WTC11 (cell line): ENCODE measurements at regions of chr11 and their contacts with region 1.

Region 1: DNA sequence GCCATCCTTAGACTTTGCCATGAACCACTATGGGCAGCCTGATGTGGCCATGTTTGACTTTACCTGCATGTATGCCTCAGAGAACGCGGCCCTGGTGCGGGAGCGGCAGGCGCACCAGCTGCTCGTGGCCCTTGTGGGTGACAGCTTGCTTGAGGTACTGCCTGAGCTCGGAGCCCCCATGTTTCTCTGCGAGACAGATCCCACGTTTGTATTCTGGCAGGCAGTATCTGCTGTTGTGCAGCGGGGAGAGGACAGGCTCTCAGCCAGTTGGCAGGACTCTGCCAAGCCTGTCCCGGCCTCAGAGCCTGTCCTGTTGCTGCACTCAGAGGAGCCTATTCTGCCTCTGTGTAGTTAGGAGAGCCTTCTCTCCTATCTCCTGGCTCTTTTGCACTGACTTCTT is 109.9 kb downstream of the MICAL2 start:
- DNase-seq: no peak
- ATAC-seq: no peak
- H3K4me3 Mint-ChIP-seq: no peak overlapping the region
- H3K27ac Mint-ChIP-seq: no peak overlapping the region
- H3K4me1 Mint-ChIP-seq: peaks cover 3% of the 10 kb centered on the region
- H3K27me3 Mint-ChIP-seq: no peaks in the 10 kb centered on the region
- CTCF ChIP-seq: no peak

Region 2: DNA sequence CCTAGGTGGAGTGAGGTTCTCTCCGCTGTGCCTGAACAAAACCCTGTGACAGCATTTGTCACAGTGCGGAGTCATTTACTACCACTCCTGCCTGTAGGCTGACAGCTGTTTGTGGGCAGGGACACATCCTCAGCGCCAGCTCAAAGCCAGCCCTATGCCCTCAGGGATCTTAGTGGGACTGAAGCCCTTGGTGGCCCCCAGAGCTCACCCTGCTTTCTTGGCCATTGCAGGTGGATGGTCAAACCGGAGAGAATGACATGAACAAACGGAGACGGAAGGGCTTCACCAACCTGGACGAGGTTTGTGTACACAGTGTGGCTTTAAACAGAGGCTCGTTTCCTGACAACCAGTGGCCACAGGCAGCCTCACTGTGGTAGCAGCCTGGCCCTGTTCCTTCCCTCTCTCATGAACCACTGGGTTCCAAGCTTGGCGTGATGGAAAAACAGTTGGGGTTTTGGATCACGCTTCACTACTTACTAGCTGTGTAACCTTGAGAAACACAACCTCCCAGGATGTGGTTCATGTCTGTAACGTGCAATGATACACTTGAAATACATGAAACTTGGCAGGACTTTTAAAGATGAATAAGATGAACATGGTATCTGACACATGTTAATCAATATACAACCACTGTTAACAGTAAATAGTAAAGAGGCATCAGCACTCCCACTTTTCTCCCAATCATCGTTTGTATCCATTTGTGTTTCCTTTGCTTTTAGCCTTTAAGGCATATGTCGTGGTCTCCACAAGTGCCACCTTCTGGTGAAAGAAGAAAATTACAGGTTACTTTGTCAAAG is 15.8 kb after region 1 on chr11:
- CTCF ChIA-PET with region 1: interaction called, 11 read pairs
- POLR2A ChIA-PET with region 1: no interaction called
- DNase-seq: no peak
- ATAC-seq: peak; percentile 70
- H3K4me3 Mint-ChIP-seq: no peak overlapping the region
- H3K27ac Mint-ChIP-seq: no peak overlapping the region
- H3K4me1 Mint-ChIP-seq: peaks cover 3% of the 10 kb centered on the region; the same call in 1 of the 2 replicates
- H3K27me3 Mint-ChIP-seq: no peaks in the 10 kb centered on the region; the same call in 1 of the 2 replicates
- CTCF ChIP-seq: peak; percentile 51; the same call in 1 of the 2 replicates